Activated CD4-positive, alpha-beta T cell treated with anti-CD3 and anti-CD28 coated beads for 36 hours (primary cell): ENCODE measurements at regions of chr12 and their contacts with region 1.

Region 1: GRCh38 chr12:14769969-14770495 is 33.2 kb downstream of the WBP11 start:
- DNase-seq: peak; percentile 94
- ATAC-seq: peak; percentile 45
- H3K4me3 Mint-ChIP-seq: peak overlapping the region; percentile 97
- H3K27ac Mint-ChIP-seq: peak overlapping the region; percentile 99
- H3K4me1 Mint-ChIP-seq: peaks cover 35% of the 10 kb centered on the region
- H3K27me3 Mint-ChIP-seq: no peaks in the 10 kb centered on the region

Region 2: GRCh38 chr12:14216405-14217294 is 553.4 kb before region 1 on chr12:
- CTCF ChIA-PET with region 1: interaction called, 3 read pairs
- POLR2A ChIA-PET with region 1: no interaction called
- intact Hi-C with region 1: loop called in 1 of 2 experiments (anchors 5 kb)
- DNase-seq: no peak
- ATAC-seq: peak; percentile 50
- H3K4me3 Mint-ChIP-seq: peak overlapping the region; percentile 21
- H3K27ac Mint-ChIP-seq: peak overlapping the region; percentile 80
- H3K4me1 Mint-ChIP-seq: peaks cover 27% of the 10 kb centered on the region
- H3K27me3 Mint-ChIP-seq: no peaks in the 10 kb centered on the region

Region 3: DNA sequence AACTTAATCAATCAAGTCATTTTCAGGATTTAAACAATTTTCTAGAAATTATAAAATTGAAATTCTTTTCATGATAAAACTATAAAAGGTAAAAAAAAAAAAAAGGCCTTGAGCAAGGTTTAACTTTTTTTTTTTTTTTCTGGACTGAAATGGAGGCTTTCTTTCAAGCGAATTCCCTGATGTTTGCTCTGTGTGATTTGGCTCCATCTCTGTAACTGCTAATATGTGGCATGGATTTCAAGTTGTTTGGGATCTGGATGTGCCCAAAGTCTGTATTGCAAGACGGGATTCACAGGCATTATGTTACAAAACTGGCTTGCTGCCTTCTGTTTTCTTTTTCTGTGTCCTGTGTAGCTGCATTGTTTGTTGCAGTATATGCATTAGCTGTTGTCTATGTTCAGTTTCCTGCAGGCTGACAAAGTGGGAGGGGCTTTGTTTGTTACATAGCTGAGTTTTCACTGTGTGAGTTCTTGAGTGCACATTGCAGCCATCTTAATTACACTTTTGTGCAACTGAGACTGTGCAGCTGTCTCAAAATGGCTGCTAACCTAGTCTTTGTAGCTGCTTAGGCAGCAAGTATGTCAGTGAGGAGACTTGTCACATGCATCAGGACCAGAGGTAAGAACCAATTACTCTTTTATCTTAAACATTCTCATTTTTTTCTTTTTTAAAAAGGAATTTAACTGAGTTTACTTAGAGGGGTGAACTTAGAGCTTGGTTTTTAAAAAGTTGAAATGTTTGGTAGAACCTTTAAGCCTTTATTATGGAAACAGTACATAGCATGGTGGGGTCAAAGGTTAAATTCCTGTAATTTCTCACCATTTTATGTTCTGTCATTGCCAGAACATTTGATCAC is 385.0 kb before region 1 on chr12:
- CTCF ChIA-PET with region 1: no interaction called
- POLR2A ChIA-PET with region 1: interaction called, 3 read pairs
- intact Hi-C with region 1: loop called (anchors 5 to 10 kb)
- DNase-seq: peak; percentile 75
- ATAC-seq: peak; percentile 96
- H3K4me3 Mint-ChIP-seq: peak overlapping the region; percentile 73
- H3K27ac Mint-ChIP-seq: peak overlapping the region; percentile 94
- H3K4me1 Mint-ChIP-seq: peaks cover 59% of the 10 kb centered on the region
- H3K27me3 Mint-ChIP-seq: no peaks in the 10 kb centered on the region

Region 4: GRCh38 chr12:14567351-14568162 is 202.5 kb before region 1 on chr12 and contains the start of gene PLBD1:
- CTCF ChIA-PET with region 1: no interaction called
- POLR2A ChIA-PET with region 1: no interaction called
- intact Hi-C with region 1: no loop called
- DNase-seq: peak; percentile 49
- ATAC-seq: peak; percentile 68
- H3K4me3 Mint-ChIP-seq: peak within 1 kb of the TSS; percentile 38
- H3K27ac Mint-ChIP-seq: no peak within 1 kb of the TSS
- H3K4me1 Mint-ChIP-seq: peaks cover 4% of the 10 kb centered on the region
- H3K27me3 Mint-ChIP-seq: peaks cover 17% of the 10 kb centered on the region
- total RNA-seq, gene PLBD1: not detected

Region 5: GRCh38 chr12:14784471-14784870 is 14.4 kb after region 1 on chr12:
- CTCF ChIA-PET with region 1: interaction called, 13 read pairs
- POLR2A ChIA-PET with region 1: interaction called, 9 read pairs
- intact Hi-C with region 1: no loop called
- DNase-seq: no peak
- ATAC-seq: no peak
- H3K4me3 Mint-ChIP-seq: no peak overlapping the region
- H3K27ac Mint-ChIP-seq: no peak overlapping the region
- H3K4me1 Mint-ChIP-seq: no peaks in the 10 kb centered on the region
- H3K27me3 Mint-ChIP-seq: no peaks in the 10 kb centered on the region

Region 6: DNA sequence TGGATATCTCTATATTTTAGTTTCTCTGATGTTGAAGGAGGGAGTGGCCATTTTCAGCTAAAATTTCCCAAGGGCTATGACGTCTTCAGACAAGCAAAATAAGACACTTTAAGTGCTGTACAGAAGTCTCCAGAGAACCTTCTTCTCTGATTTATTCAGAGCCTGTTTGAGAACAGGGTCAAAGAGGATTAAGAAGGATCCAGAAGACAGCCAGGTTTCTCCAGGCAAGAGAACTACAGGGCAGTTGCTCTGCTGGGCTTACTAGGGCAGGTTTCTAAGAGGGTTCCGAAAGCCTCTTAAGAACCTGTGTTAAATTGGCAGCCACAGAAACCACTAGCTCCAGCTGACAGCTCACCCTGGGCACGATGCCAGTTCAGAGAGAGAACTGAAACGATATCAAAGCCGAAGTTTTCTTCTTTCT is 114.4 kb after region 1 on chr12:
- CTCF ChIA-PET with region 1: no interaction called
- POLR2A ChIA-PET with region 1: no interaction called
- intact Hi-C with region 1: no loop called
- DNase-seq: peak; percentile 86
- ATAC-seq: peak; percentile 91
- H3K4me3 Mint-ChIP-seq: no peak overlapping the region
- H3K27ac Mint-ChIP-seq: no peak overlapping the region
- H3K4me1 Mint-ChIP-seq: peaks cover 24% of the 10 kb centered on the region
- H3K27me3 Mint-ChIP-seq: peaks cover 13% of the 10 kb centered on the region

Region 7: GRCh38 chr12:14910090-14910915 is 140.3 kb after region 1 on chr12:
- CTCF ChIA-PET with region 1: no interaction called
- POLR2A ChIA-PET with region 1: no interaction called
- intact Hi-C with region 1: loop called in 1 of 2 experiments (anchors 1 kb)
- DNase-seq: peak; percentile 73
- ATAC-seq: peak; percentile 85
- H3K4me3 Mint-ChIP-seq: peak overlapping the region; percentile 37
- H3K27ac Mint-ChIP-seq: peak overlapping the region; percentile 91
- H3K4me1 Mint-ChIP-seq: peaks cover 41% of the 10 kb centered on the region
- H3K27me3 Mint-ChIP-seq: no peaks in the 10 kb centered on the region

Region 8: DNA sequence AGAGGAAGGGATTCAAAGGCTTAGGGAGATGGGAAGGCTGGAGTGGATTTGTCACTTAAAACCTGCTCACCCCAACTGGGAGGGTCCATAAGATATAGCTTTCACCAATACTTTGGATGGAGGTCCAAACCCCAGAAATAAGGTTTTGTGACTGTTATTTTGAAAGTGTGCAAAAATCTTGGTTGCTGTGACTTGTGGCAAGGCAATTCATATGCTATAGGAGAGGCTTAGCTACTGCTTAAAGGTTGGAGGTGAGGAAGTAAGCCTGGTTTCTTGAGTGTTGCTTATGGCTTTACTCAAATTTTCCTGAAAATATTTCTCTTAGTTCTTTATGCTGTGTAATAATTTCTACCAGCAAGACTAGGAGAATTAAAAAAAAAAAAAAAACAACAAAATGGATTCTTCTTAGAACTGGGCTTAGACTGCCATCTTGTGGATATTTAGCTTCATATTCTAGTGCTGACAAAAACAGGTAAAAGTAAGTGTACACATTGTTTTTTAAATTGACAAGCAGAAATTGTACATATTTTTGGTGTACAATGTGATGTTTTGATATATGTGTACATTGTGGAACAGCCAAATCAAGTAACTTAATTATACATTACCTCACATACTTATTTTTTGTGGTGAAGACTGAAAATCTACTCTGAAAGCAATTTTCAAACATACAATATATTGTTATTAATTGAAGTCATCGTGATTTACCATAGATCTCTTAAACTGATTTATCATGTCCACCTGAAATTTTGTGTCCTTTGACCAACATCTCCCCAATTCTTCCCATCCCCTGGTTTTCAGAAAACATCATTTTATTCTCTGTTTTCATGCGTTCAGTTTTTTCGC is 225.8 kb after region 1 on chr12:
- CTCF ChIA-PET with region 1: interaction called, 4 read pairs
- POLR2A ChIA-PET with region 1: interaction called, 8 read pairs
- intact Hi-C with region 1: loop called in 1 of 2 experiments (anchors 2 kb)
- DNase-seq: no peak
- ATAC-seq: peak; percentile 45
- H3K4me3 Mint-ChIP-seq: no peak overlapping the region
- H3K27ac Mint-ChIP-seq: peak overlapping the region; percentile 76
- H3K4me1 Mint-ChIP-seq: peaks cover 29% of the 10 kb centered on the region
- H3K27me3 Mint-ChIP-seq: no peaks in the 10 kb centered on the region

Region 9: GRCh38 chr12:15033641-15034040 is 263.6 kb after region 1 on chr12:
- CTCF ChIA-PET with region 1: no interaction called
- POLR2A ChIA-PET with region 1: no interaction called
- intact Hi-C with region 1: no loop called
- DNase-seq: no peak
- ATAC-seq: no peak
- H3K4me3 Mint-ChIP-seq: no peak overlapping the region
- H3K27ac Mint-ChIP-seq: no peak overlapping the region
- H3K4me1 Mint-ChIP-seq: no peaks in the 10 kb centered on the region
- H3K27me3 Mint-ChIP-seq: peaks cover 4% of the 10 kb centered on the region